ENCODE measurements at regions of chr2 and their contacts with region 1.

Region 1: GRCh38 chr2:126699716-126700581 is 44.0 kb downstream of the GYPC start:
- DNase-seq: no peak
- ATAC-seq: peak; percentile 8; the same call in 1 of the 3 replicates
- H3K4me3 ChIP-seq: no peak overlapping the region
- H3K27ac ChIP-seq: no peak overlapping the region
- H3K4me1 ChIP-seq: peaks cover 0 to 3% of the 10 kb centered on the region in 2 experiments; a peak in 1 of 5 replicates
- H3K27me3 ChIP-seq: no peaks in the 10 kb centered on the region
- CTCF ChIP-seq: no peak
- EP300 ChIP-seq: no peak
- POLR2A ChIP-seq: no peak
- RAD21 ChIP-seq: no peak

Region 2: DNA sequence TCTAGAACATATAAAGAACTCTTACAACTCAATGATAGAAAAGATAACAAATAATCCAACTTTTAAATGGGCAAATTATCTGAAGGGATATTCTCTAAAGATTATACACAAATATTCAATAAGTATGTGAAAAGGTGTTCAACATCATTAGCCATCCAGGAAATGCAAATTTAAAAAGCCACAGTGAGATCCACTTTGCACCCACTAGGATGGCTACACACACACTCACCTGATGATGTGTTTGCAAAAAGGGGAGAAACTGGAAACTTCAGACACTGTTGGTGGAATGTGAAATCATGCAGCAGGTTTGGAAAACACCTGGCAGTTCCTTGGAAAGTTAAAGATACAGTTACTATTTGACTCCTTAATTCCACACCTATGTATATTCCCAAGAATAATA is 131.2 kb before region 1 on chr2:
- CTCF ChIA-PET with region 1: no interaction called
- POLR2A ChIA-PET with region 1: no interaction called
- in situ Hi-C with region 1: no loop called
- intact Hi-C with region 1: no loop called
- DNase-seq: no peak
- ATAC-seq: no peak
- H3K4me3 ChIP-seq: no peak overlapping the region
- H3K27ac ChIP-seq: no peak overlapping the region
- H3K4me1 ChIP-seq: no peaks in the 10 kb centered on the region
- H3K27me3 ChIP-seq: peaks cover 0 to 12% of the 10 kb centered on the region in 2 experiments; a peak in 1 of 5 replicates
- CTCF ChIP-seq: no peak
- EP300 ChIP-seq: no peak
- POLR2A ChIP-seq: no peak
- RAD21 ChIP-seq: no peak

Region 3: DNA sequence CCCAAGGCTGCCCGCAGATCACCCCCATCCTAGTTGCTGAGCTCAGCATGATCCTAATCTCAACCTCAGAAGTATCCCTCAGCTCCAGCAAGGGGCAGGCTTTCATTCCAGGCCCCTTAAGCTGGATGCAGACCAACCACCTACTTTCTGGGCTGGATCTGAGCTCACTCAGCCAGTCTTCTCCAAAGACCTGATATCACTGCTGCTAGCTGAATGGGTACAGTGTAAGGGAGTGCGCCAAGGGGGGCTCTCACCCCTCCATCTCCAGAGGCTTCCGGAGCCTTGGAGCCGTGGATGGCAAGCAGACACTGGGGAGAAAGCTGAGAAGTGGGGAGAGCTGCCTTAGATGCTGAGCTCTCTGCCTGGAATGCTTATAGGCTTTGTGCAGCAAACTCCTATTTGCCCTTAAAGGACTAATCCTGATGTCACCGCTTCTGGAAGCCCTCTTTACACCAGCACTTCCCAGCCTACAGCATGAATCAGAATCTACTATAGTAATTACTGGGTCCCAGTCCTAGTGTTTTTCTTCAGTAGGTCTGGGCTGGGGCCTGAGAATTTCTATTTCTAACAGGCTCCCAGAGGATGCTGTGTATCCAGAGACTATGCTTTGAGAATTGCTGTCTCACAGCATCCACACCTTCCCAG is 13.0 kb before region 1 on chr2:
- CTCF ChIA-PET with region 1: no interaction called
- POLR2A ChIA-PET with region 1: interaction called, 14 read pairs
- in situ Hi-C with region 1: no loop called
- intact Hi-C with region 1: no loop called
- DNase-seq: no peak
- ATAC-seq: no peak
- H3K4me3 ChIP-seq: no peak overlapping the region
- H3K27ac ChIP-seq: no peak overlapping the region
- H3K4me1 ChIP-seq: peaks cover 0 to 3% of the 10 kb centered on the region in 2 experiments; a peak in 2 of 5 replicates
- H3K27me3 ChIP-seq: no peaks in the 10 kb centered on the region
- CTCF ChIP-seq: no peak
- EP300 ChIP-seq: no peak
- POLR2A ChIP-seq: no peak
- RAD21 ChIP-seq: no peak

Measured in K562 (cell line).